Activated CD8-positive, alpha-beta T cell treated with anti-CD3 and anti-CD28 coated beads for 36 hours (primary cell): ENCODE measurements at regions of chr6 and their contacts with region 1.

Region 1: DNA sequence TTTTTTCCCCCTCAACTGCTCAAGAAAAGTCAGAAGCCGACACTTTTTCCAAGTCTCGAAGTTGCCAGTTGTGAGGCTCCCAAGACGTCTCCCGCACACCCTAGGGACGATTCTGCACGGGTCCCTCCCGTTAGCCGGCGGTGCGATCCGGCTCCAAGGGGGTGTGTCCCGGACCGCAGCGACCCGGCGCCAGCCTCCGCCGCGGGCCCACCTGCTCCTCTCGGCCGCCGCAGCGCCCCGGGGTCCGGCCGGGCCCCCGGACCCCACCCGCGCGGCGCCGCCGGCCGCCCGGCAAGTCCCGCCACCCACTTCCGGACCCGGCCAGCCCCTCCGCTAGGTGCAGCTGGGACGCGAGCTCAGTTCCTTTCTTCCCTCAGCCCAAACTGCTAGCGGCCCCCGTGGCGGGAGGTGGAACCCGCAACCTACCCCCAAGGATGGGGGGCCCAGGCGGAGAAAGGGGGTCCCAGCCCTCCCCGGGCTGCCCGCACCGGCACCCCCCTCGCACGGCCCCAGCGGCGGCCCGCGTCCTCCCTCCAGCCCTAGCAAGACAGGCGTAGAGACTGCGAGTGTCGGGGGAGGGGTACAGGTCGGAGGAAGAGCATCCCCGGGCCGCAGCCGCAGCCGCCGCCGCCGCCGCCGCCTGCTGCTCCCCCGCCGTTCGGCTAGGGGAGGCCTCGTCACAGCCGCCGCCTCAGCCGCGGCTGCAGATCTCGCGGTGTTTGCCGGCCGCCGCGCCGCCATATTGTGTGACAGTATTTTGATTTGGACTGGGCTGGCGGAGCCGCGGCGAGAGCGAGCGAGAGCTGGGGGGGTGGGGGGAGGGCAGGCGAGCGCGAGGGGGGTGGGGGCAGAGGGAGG is 485 bp upstream of the TAB2 start:
- DNase-seq: peak; percentile 91
- ATAC-seq: peak; percentile 60
- H3K4me3 Mint-ChIP-seq: peak overlapping the region; percentile 93
- H3K27ac Mint-ChIP-seq: peak overlapping the region; percentile 98
- H3K4me1 Mint-ChIP-seq: peaks cover 27% of the 10 kb centered on the region
- H3K27me3 Mint-ChIP-seq: no peaks in the 10 kb centered on the region
- CTCF ChIP-seq: no peak

Region 2: GRCh38 chr6:148926478-148926877 is 390.5 kb before region 1 on chr6:
- CTCF ChIA-PET with region 1: no interaction called
- POLR2A ChIA-PET with region 1: no interaction called
- intact Hi-C with region 1: no loop called
- DNase-seq: no peak
- ATAC-seq: no peak
- H3K4me3 Mint-ChIP-seq: no peak overlapping the region
- H3K27ac Mint-ChIP-seq: no peak overlapping the region
- H3K4me1 Mint-ChIP-seq: no peaks in the 10 kb centered on the region
- H3K27me3 Mint-ChIP-seq: no peaks in the 10 kb centered on the region
- CTCF ChIP-seq: no peak

Region 3: GRCh38 chr6:149082286-149082707 is 234.7 kb before region 1 on chr6:
- CTCF ChIA-PET with region 1: interaction called, 5 read pairs
- POLR2A ChIA-PET with region 1: interaction called, 7 read pairs
- intact Hi-C with region 1: loop called (anchors 5 kb)
- DNase-seq: peak; percentile 97
- ATAC-seq: peak; percentile 86
- H3K4me3 Mint-ChIP-seq: no peak overlapping the region
- H3K27ac Mint-ChIP-seq: no peak overlapping the region
- H3K4me1 Mint-ChIP-seq: peaks cover 50% of the 10 kb centered on the region
- H3K27me3 Mint-ChIP-seq: no peaks in the 10 kb centered on the region
- CTCF ChIP-seq: peak; percentile 81

Region 4: DNA sequence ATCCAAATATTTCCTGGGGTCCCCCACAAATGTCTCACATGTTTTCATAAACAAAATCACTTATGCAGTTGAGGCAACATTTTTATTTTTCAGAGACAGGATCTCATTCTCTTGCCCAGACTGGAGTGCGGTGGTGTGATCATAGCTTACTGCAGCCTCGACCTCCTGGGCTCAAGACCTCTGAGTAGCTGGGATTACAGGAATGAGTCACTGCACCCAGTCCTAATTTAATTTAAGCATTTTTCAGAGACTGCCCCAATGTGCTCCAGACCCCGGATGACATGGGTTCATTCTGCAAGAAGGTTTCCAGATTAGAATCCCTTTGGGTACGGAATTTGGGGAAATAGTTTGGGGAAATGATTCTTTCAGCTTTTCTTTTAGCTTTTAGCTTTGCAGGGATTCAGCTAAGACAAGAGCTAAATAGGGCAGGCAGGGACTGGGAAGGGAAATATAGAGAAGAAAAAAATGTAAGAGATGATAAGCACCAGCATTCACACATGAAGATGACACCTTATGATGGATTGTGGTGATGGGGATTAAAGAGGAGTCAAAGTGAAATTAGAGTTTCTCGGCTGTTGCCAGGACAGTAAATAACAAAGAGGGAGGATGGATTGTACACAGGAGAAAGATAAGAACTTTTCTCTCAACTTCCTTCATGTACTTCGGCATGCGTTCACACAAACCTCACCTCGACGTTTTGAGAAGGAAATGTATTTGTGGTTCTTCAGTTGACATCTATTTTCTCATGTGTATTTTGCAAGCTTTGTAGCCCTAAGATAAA is 168.9 kb before region 1 on chr6:
- CTCF ChIA-PET with region 1: no interaction called
- POLR2A ChIA-PET with region 1: interaction called, 10 read pairs
- intact Hi-C with region 1: no loop called
- DNase-seq: no peak
- ATAC-seq: peak; percentile 66
- H3K4me3 Mint-ChIP-seq: peak overlapping the region; percentile 11
- H3K27ac Mint-ChIP-seq: peak overlapping the region; percentile 85
- H3K4me1 Mint-ChIP-seq: peaks cover 66% of the 10 kb centered on the region
- H3K27me3 Mint-ChIP-seq: no peaks in the 10 kb centered on the region
- CTCF ChIP-seq: no peak

Region 5: DNA sequence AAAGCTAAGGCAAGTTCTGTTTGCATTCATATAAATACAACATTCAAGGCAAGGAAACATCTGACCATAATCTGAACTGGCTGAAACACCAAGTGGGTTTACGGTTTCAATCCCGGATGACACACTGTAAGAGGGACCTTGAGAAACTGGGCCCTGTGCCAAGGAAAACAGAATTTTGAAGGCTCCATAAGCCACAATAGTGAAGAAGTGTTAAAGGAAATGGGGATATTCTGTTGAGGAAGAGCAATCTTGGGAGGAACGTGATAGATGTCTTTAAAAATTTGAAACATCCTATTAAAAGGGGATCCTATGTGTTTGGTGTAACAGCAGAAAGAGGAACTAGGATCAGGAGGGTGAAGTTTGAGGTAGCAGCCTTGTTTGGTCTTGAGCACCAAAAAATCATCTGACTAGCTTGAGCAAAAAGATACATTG is 81.9 kb before region 1 on chr6:
- CTCF ChIA-PET with region 1: no interaction called
- POLR2A ChIA-PET with region 1: interaction called, 4 read pairs
- intact Hi-C with region 1: loop called (anchors 2 kb)
- DNase-seq: no peak
- ATAC-seq: no peak
- H3K4me3 Mint-ChIP-seq: peak overlapping the region; percentile 59
- H3K27ac Mint-ChIP-seq: peak overlapping the region; percentile 94
- H3K4me1 Mint-ChIP-seq: peaks cover 51% of the 10 kb centered on the region
- H3K27me3 Mint-ChIP-seq: no peaks in the 10 kb centered on the region
- CTCF ChIP-seq: no peak

Region 6: DNA sequence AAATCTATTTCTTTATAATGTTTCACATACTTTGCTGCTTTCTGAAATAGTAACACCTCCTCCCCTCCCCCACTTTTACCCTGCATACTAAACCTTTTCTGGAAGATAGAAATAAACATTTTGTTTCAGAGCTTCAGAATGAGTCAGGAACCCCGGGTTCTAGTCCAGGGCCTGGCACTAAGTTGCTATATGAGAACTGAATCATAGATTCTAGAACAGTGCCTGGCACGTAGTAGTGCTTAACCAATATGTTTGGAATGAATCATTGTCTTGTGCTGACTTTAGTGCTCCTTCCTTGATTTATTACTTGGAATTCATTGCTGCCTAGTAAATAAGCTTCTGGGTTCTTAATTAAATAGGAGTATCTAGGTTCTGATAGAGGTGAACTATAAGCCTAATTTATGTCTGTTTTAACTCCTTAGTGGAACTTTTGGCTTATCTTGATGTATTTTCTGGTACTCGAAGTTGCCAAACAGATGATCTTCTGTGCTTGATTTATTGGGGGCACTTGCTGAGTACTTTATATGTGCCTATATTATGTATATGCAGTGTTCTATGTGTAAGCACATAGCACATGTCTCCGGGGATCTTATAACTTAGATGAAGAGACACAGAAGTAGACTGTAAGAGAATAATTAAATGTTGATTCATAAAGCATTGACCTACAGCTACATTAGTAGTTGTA is 19.0 kb after region 1 on chr6:
- CTCF ChIA-PET with region 1: interaction called, 13 read pairs
- POLR2A ChIA-PET with region 1: interaction called, 11 read pairs
- intact Hi-C with region 1: no loop called
- DNase-seq: peak; percentile 82
- ATAC-seq: peak; percentile 91
- H3K4me3 Mint-ChIP-seq: peak overlapping the region; percentile 45
- H3K27ac Mint-ChIP-seq: peak overlapping the region; percentile 95
- H3K4me1 Mint-ChIP-seq: peaks cover 87% of the 10 kb centered on the region
- H3K27me3 Mint-ChIP-seq: no peaks in the 10 kb centered on the region
- CTCF ChIP-seq: no peak